BJ (cell line): ENCODE measurements at regions of chr7 and their contacts with region 1.

Region 1: GRCh38 chr7:25098096-25099046 is 26.7 kb downstream of the CYCS start:
- DNase-seq: no peak
- H3K4me3 ChIP-seq: no peak overlapping the region
- H3K27me3 ChIP-seq: no peaks in the 10 kb centered on the region
- CTCF ChIP-seq: peak; percentile 95

Region 2: GRCh38 chr7:25117226-25118047 is 19.1 kb after region 1 on chr7:
- CTCF ChIA-PET with region 1: interaction called, 25 read pairs
- POLR2A ChIA-PET with region 1: no interaction called
- DNase-seq: no peak
- H3K4me3 ChIP-seq: no peak overlapping the region
- H3K27me3 ChIP-seq: no peaks in the 10 kb centered on the region
- CTCF ChIP-seq: no peak

Region 3: GRCh38 chr7:25148772-25149575 is 50.6 kb after region 1 on chr7:
- CTCF ChIA-PET with region 1: no interaction called
- POLR2A ChIA-PET with region 1: no interaction called
- DNase-seq: no peak
- H3K4me3 ChIP-seq: no peak overlapping the region
- H3K27me3 ChIP-seq: no peaks in the 10 kb centered on the region
- CTCF ChIP-seq: no peak

Region 4: GRCh38 chr7:25303281-25304156 is 205.1 kb after region 1 on chr7:
- CTCF ChIA-PET with region 1: no interaction called
- POLR2A ChIA-PET with region 1: no interaction called
- DNase-seq: no peak
- H3K4me3 ChIP-seq: no peak overlapping the region
- H3K27me3 ChIP-seq: peaks cover 1% of the 10 kb centered on the region; the same call in 1 of the 2 replicates
- CTCF ChIP-seq: no peak

Region 5: GRCh38 chr7:26136831-26137455 is 1038.6 kb after region 1 on chr7:
- CTCF ChIA-PET with region 1: no interaction called
- POLR2A ChIA-PET with region 1: no interaction called
- DNase-seq: no peak
- H3K4me3 ChIP-seq: no peak overlapping the region
- H3K27me3 ChIP-seq: peaks cover 3% of the 10 kb centered on the region
- CTCF ChIP-seq: no peak